ENCODE measurements at regions of chr10 and their contacts with region 1.

Region 1: DNA sequence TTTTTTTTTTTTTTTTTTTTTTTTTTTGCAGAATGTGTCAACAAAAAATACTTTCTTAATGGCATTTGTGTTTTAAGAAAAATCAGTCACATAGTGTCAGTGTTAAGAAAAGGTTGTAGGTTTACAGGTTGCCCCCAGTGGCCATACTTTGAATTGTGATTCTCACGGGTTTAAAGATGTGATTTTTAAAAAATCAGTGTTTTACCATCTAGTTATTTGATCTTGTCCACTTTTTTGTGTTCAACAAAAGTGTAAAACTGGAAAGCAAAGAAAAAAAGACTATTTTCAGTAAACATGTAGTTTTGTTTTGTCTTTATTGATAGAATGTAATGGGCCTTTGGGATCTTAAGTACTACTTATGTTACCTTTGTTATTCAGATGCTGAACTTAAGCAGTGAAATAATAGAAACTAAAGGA is 25.7 kb downstream of the SUV39H2 start:
- DNase-seq: peak; percentile 33
- CTCF ChIP-seq: peak; percentile 36

Region 2: DNA sequence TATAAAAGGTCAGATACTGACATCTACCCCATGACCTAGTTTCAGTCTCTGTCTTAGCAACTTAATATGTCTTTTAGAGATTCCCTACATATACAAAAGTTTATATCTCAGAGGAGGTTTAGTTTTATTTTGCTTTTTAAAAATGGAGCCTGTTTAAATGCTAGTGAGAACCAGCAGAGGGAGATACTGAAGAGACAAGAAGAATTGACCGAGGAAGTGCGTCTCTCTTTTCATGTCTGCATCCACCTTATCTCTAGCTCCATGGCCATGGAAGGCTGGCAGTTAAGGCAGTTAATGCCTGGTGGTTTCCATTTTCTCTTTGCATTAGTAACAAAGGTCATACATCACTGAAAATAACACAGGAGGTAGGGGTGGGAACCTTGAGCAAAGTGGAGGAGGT is 15.0 kb before region 1 on chr10:
- CTCF ChIA-PET with region 1: interaction called, 11 read pairs
- POLR2A ChIA-PET with region 1: no interaction called
- DNase-seq: peak; percentile 22
- CTCF ChIP-seq: peak; percentile 3

Region 3: GRCh38 chr10:14926722-14927416 is 22.5 kb after region 1 on chr10:
- CTCF ChIA-PET with region 1: interaction called, 5 read pairs
- POLR2A ChIA-PET with region 1: interaction called, 10 read pairs
- DNase-seq: peak; percentile 86
- CTCF ChIP-seq: no peak

Region 4: DNA sequence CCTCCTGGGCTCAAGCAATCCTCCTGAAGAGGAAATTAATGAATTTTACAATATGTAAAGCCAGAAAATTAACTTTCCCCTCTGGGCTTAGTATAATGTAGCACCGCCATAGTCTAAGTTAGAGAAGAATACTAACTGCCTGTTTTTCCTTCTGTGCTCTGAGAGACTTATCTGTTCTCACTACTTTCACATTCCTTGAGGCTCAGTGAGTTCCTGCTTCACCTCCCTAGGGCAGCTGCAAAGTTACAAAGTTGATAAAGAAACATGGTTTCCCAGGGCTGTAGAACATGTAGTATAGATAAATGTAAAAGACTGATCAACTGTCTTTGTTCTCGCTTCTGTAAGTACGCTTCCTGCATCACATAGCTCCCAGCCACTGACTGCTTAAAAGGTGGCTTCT is 123.4 kb after region 1 on chr10:
- CTCF ChIA-PET with region 1: no interaction called
- POLR2A ChIA-PET with region 1: no interaction called
- DNase-seq: no peak
- CTCF ChIP-seq: no peak

Region 5: GRCh38 chr10:15046626-15047025 is 142.3 kb after region 1 on chr10:
- CTCF ChIA-PET with region 1: no interaction called
- POLR2A ChIA-PET with region 1: no interaction called
- DNase-seq: no peak
- CTCF ChIP-seq: no peak

Region 6: GRCh38 chr10:15278786-15279185 is 374.5 kb after region 1 on chr10:
- CTCF ChIA-PET with region 1: no interaction called
- POLR2A ChIA-PET with region 1: no interaction called
- DNase-seq: no peak
- CTCF ChIP-seq: no peak

Measured in GM10248 (cell line).